ENCODE measurements at regions of chr5 and their contacts with region 1.

Region 1: GRCh38 chr5:172106511-172107356 is 81.3 kb downstream of the STK10 start:
- DNase-seq: peak; percentile 82
- ATAC-seq: peak; percentile 14

Region 2: DNA sequence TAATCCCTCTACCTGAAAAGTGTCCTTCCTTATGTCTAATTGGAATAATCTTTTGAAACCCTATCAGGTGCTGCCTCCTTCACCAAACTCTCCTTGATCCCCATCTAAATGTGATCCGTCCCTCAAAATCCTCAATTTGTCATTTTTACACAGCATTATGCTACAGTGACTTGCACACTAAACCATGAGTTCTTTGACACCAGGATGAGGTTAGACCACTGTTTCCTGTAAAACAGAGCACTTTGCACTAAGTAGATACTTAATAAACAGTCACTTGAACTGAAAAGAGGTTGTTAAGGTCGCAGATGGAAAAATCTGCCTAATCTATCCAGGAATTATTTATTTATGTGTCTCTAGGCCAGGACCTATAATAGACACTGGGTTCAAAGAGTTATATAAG is 841.9 kb before region 1 on chr5:
- intact Hi-C with region 1: no loop called
- DNase-seq: no peak
- ATAC-seq: no peak

Region 3: GRCh38 chr5:171606414-171607024 is 500.2 kb before region 1 on chr5:
- intact Hi-C with region 1: no loop called
- DNase-seq: no peak
- ATAC-seq: no peak

Region 4: DNA sequence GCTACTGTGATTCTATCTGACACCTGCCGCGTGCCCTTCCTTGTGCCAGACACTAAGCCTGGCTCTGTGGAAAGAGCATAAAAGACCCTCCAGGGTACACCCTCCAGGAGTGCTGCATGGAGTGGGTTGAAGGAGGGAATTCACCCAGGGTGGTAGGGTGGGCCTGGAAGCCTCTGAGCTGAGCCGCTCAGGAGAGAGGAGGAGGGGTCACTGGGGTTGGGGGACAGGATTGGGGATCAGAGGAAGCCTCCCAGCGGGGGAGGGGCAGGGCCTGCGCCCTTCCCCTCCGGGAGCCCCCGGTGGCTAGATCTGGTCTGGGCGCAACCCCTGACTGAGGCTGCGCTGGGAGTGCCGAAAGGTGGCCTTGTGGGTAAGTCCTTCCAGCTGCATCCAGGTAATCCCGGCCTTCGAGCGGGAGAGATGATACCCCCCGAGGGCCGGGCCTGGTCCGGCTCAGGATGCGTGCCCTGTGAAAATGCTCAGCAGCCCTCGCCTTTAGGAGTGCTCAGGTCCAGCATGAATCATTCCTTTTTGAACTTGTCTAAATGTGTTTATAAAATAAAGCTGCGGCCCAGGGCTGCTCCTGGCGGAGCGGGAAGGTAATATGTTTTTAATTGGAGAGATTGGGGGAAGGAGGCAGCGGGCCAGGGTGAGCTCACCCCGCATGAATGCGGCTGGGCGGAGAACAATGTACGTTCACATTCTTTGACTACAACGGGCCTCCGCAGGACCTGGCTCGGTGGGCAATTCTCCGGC is 439.2 kb before region 1 on chr5:
- intact Hi-C with region 1: no loop called
- DNase-seq: peak; percentile 73
- ATAC-seq: peak; percentile 77

Region 5: GRCh38 chr5:172188033-172188892 is 81.5 kb after region 1 on chr5 and contains the start of gene STK10:
- intact Hi-C with region 1: loop called (anchors 1 kb)
- DNase-seq: peak; percentile 96
- ATAC-seq: peak; percentile 97
- total RNA-seq, gene STK10: 8.9 TPM

Region 6: GRCh38 chr5:172283020-172283861 is 176.5 kb after region 1 on chr5 and contains the start of gene UBTD2:
- intact Hi-C with region 1: loop called (anchors 5 kb)
- DNase-seq: peak; percentile 94
- ATAC-seq: peak; percentile 91
- total RNA-seq, gene UBTD2: 8.6 TPM

Region 7: GRCh38 chr5:172293054-172293744 is 186.5 kb after region 1 on chr5:
- intact Hi-C with region 1: loop called (anchors 1 kb)
- DNase-seq: peak; percentile 73
- ATAC-seq: peak; percentile 96

Region 8: GRCh38 chr5:172443441-172444109 is 336.8 kb after region 1 on chr5:
- intact Hi-C with region 1: loop called (anchors 10 kb)
- DNase-seq: peak; percentile 89
- ATAC-seq: peak; percentile 66

Measured in Right ventricle myocardium inferior (tissue), 1 donor.